Mucosa of descending colon (tissue), 3 donors: ENCODE measurements at regions of chr1 and their contacts with region 1.

Region 1: DNA sequence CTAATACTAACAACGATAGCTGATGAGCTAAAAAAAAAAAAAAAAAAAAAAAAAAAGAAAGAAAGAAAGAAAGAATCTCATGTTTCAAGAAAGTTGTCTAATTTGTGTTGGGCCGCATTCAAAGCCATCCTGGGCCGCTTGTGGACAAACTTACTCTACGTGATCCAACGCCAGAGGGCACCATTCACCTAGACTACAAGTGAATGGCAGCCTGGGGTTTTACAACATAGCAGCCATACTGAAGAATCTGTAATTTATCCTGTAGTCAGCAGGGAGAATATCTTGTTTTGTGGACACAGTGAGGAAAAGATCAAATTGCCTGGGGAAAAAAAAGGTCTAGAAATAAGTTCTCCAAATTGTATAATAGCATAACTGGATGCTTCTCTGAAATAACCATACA is 47.0 kb downstream of the CYP2J2 start:
- DNase-seq: peak in 2 of 3 donors; percentile 76 to 97
- ATAC-seq: peak; percentile 99
- H3K4me3 ChIP-seq: no peak overlapping the region
- H3K4me1 ChIP-seq: peaks cover 7% of the 10 kb centered on the region
- CTCF ChIP-seq: no peak

Region 2: DNA sequence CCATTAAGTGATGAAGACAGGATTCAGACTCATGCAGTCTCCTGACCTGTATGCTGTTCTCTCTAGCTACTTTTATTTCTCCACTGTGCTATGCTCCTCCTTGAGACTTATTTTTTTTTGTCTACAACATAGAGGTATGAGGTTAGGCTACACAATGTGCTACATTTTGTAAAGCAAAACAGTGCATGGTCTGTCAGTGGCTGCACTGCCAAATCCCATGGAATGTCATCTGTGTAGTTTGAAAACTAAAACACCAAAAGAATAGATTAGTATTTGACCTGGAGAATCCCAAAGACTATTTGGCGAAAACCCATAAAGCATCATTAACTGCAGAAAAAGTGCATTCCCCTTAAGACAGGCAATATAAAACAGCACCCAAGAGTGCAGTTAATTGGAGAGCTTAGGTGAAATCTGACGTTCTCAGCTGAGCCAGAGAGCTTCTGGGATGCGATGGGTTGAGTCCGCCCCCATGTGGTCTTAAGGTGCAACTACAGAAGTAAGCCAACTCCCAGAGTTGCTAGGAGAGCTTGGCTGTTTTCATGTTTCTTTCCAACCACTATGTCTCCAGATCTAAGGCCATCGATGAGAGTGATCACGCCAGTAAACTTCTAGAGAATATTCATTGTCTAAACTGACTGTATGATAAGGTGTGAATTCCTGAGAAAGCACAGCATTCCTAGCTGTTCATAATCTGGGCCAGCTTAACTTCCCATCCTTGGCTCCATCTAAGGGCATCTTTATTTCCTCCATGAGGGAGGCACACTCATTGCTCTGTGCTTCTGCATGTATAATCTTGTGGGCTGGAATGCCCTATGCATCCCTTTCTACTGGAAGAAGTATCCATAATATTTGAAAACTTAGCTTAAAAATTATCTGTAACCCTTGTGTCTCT is 67.7 kb after region 1 on chr1:
- intact Hi-C with region 1: loop called in 1 of 2 experiments (anchors 2 kb)
- DNase-seq: peak in 2 of 3 donors; percentile 53 to 69
- ATAC-seq: peak; percentile 97
- H3K4me3 ChIP-seq: no peak overlapping the region
- H3K4me1 ChIP-seq: no peaks in the 10 kb centered on the region
- CTCF ChIP-seq: peak; percentile 72